ENCODE measurements at regions of chr13 and their contacts with region 1.

Region 1: DNA sequence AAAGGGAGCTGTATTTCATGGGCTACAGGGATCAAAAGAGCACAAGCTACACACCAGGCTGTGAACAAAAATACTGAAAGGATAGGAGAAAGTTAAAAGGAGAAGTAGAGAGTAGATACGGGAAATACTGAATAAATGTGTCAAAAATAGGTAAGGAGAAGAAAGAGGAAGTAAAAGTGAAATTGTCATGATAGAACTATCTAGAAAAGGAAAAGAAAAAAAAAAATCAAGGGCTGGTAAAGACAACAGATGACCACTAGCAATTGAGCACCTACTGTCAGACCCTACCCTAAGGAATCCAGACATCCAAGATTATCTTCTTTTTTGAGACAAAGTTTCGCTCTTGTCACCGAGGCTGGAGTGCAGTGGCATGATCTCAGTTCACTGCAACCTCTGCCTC is 4.8 kb downstream of the RUBCNL start:
- DNase-seq: no peak
- ATAC-seq: peak; percentile 40
- H3K4me3 ChIP-seq: peak overlapping the region; percentile 37
- H3K27ac ChIP-seq: peak overlapping the region; percentile 85
- H3K4me1 ChIP-seq: peaks cover 48% of the 10 kb centered on the region
- H3K27me3 ChIP-seq: no peaks in the 10 kb centered on the region
- CTCF ChIP-seq: no peak
- EP300 ChIP-seq: peak in 1 of 2 experiments; percentile 48; a peak in 2 of 4 replicates
- POLR2A ChIP-seq: no peak
- RAD21 ChIP-seq: no peak

Region 2: GRCh38 chr13:46369506-46370277 is 12.5 kb before region 1 on chr13:
- CTCF ChIA-PET with region 1: interaction called, 47 read pairs
- POLR2A ChIA-PET with region 1: interaction called, 6 read pairs
- RAD21 ChIA-PET with region 1: interaction called, 100 read pairs
- SMC1A ChIA-PET with region 1: interaction called, 81 read pairs
- in situ Hi-C with region 1: no loop called
- intact Hi-C with region 1: no loop called
- DNase-seq: no peak
- ATAC-seq: peak; percentile 78
- H3K4me3 ChIP-seq: peak overlapping the region; percentile 10
- H3K27ac ChIP-seq: peak overlapping the region; percentile 53
- H3K4me1 ChIP-seq: peaks cover 47% of the 10 kb centered on the region
- H3K27me3 ChIP-seq: no peaks in the 10 kb centered on the region
- CTCF ChIP-seq: no peak
- EP300 ChIP-seq: no peak
- POLR2A ChIP-seq: no peak
- RAD21 ChIP-seq: no peak

Region 3: GRCh38 chr13:46675016-46675415 is 292.8 kb after region 1 on chr13:
- CTCF ChIA-PET with region 1: no interaction called
- POLR2A ChIA-PET with region 1: no interaction called
- RAD21 ChIA-PET with region 1: no interaction called
- SMC1A ChIA-PET with region 1: no interaction called
- in situ Hi-C with region 1: no loop called
- intact Hi-C with region 1: no loop called
- DNase-seq: no peak
- ATAC-seq: no peak
- H3K4me3 ChIP-seq: no peak overlapping the region
- H3K27ac ChIP-seq: no peak overlapping the region
- H3K4me1 ChIP-seq: peaks cover 26% of the 10 kb centered on the region
- H3K27me3 ChIP-seq: no peaks in the 10 kb centered on the region
- CTCF ChIP-seq: no peak
- EP300 ChIP-seq: no peak
- POLR2A ChIP-seq: no peak
- RAD21 ChIP-seq: no peak

Region 4: GRCh38 chr13:46804391-46804815 is 422.2 kb after region 1 on chr13:
- CTCF ChIA-PET with region 1: no interaction called
- POLR2A ChIA-PET with region 1: no interaction called
- RAD21 ChIA-PET with region 1: no interaction called
- SMC1A ChIA-PET with region 1: no interaction called
- in situ Hi-C with region 1: no loop called
- intact Hi-C with region 1: no loop called
- DNase-seq: no peak
- ATAC-seq: no peak
- H3K4me3 ChIP-seq: no peak overlapping the region
- H3K27ac ChIP-seq: no peak overlapping the region
- H3K4me1 ChIP-seq: no peaks in the 10 kb centered on the region
- H3K27me3 ChIP-seq: no peaks in the 10 kb centered on the region; a peak in 1 of 4 replicates
- CTCF ChIP-seq: no peak
- EP300 ChIP-seq: no peak
- POLR2A ChIP-seq: no peak
- RAD21 ChIP-seq: no peak

Region 5: DNA sequence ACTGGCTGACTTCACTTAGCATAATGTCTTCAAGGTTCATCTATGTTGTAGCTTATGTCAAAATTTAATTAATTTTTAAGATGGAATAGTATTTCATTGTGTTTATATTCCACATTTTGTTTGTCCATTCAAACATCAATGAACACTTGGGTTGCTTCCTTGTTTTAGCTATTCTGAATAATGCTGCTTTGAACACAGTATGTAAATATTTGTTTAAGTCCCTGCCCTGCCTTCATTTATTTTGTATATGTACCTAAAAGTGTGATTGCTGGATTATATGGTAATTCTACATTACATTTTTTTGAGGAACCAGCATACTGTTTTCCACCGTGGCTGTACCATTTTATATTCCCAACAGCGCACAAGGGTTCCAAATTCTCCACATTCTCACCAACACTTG is 1636.4 kb after region 1 on chr13:
- CTCF ChIA-PET with region 1: no interaction called
- POLR2A ChIA-PET with region 1: no interaction called
- RAD21 ChIA-PET with region 1: no interaction called
- SMC1A ChIA-PET with region 1: no interaction called
- in situ Hi-C with region 1: no loop called
- intact Hi-C with region 1: no loop called
- DNase-seq: no peak
- ATAC-seq: no peak
- H3K4me3 ChIP-seq: no peak overlapping the region
- H3K27ac ChIP-seq: no peak overlapping the region
- H3K4me1 ChIP-seq: no peaks in the 10 kb centered on the region
- H3K27me3 ChIP-seq: no peaks in the 10 kb centered on the region
- CTCF ChIP-seq: no peak
- EP300 ChIP-seq: no peak
- POLR2A ChIP-seq: no peak
- RAD21 ChIP-seq: no peak